Endothelial cell of umbilical vein (primary cell): ENCODE measurements at regions of chr10 and their contacts with region 1.

Region 1: GRCh38 chr10:63376560-63377304 is 89.0 kb downstream of the JMJD1C start:
- DNase-seq: peak; percentile 37
- H3K4me3 ChIP-seq: no peak overlapping the region
- H3K27ac ChIP-seq: no peak overlapping the region
- H3K4me1 ChIP-seq: peaks cover 22% of the 10 kb centered on the region
- H3K27me3 ChIP-seq: no peaks in the 10 kb centered on the region
- CTCF ChIP-seq: no peak
- POLR2A ChIP-seq: no peak

Region 2: DNA sequence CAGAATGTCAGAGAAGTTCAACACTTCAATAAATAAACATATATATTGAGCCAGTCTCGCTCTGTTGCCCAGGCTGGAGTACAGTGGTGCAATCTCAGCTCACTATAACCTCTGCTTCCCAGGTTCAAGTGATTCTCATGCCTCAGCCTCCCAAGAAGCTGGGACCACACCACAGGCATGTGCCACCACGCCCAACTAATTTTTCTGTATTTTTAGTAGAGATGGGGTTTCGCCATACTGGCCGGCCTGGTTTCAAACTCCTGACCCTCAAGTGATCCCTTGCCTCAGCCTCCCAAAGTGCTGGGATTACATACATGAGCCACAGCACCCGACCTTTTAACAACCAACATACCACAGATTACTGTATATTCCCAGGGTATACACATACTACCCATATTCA is 45.1 kb before region 1 on chr10:
- CTCF ChIA-PET with region 1: no interaction called
- POLR2A ChIA-PET with region 1: interaction called, 10 read pairs
- dilution Hi-C with region 1: no loop called
- intact Hi-C with region 1: no loop called
- DNase-seq: no peak
- H3K4me3 ChIP-seq: no peak overlapping the region
- H3K27ac ChIP-seq: no peak overlapping the region
- H3K4me1 ChIP-seq: no peaks in the 10 kb centered on the region
- H3K27me3 ChIP-seq: no peaks in the 10 kb centered on the region
- CTCF ChIP-seq: no peak
- POLR2A ChIP-seq: no peak

Region 3: GRCh38 chr10:63396133-63396761 is 19.5 kb after region 1 on chr10:
- CTCF ChIA-PET with region 1: no interaction called
- POLR2A ChIA-PET with region 1: no interaction called
- dilution Hi-C with region 1: no loop called
- intact Hi-C with region 1: no loop called
- DNase-seq: no peak
- H3K4me3 ChIP-seq: no peak overlapping the region
- H3K27ac ChIP-seq: no peak overlapping the region
- H3K4me1 ChIP-seq: no peaks in the 10 kb centered on the region
- H3K27me3 ChIP-seq: no peaks in the 10 kb centered on the region
- CTCF ChIP-seq: no peak
- POLR2A ChIP-seq: no peak

Region 4: DNA sequence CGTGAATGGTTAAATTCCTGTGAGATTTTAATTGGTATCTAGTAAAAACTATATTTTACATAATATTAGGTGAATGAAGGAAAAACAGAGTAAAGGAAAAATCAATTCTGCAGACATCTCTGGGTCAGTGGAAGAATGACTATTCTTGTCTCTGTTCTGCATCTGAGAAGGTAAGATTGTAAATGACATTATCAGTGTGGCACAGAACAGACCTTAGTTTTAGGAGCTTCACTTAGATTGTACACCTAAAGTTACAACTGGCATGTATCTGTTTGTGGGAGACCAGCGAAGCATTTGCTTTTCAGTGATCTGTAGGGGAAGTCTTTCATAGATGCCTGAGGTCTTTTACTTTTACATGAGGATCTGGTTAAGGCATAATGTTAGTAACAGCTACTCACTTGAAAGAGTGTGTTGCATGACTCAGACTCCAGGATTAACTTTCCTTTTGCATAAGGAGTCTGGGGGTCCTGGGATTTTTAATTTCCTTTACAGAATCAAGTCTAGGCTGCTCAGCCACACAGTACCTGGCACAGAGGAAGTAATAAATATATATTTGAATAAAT is 32.8 kb after region 1 on chr10:
- CTCF ChIA-PET with region 1: no interaction called
- POLR2A ChIA-PET with region 1: no interaction called
- dilution Hi-C with region 1: no loop called
- intact Hi-C with region 1: no loop called
- DNase-seq: peak; percentile 23
- H3K4me3 ChIP-seq: no peak overlapping the region
- H3K27ac ChIP-seq: no peak overlapping the region
- H3K4me1 ChIP-seq: peaks cover 13% of the 10 kb centered on the region
- H3K27me3 ChIP-seq: no peaks in the 10 kb centered on the region
- CTCF ChIP-seq: no peak
- POLR2A ChIP-seq: no peak

Region 5: DNA sequence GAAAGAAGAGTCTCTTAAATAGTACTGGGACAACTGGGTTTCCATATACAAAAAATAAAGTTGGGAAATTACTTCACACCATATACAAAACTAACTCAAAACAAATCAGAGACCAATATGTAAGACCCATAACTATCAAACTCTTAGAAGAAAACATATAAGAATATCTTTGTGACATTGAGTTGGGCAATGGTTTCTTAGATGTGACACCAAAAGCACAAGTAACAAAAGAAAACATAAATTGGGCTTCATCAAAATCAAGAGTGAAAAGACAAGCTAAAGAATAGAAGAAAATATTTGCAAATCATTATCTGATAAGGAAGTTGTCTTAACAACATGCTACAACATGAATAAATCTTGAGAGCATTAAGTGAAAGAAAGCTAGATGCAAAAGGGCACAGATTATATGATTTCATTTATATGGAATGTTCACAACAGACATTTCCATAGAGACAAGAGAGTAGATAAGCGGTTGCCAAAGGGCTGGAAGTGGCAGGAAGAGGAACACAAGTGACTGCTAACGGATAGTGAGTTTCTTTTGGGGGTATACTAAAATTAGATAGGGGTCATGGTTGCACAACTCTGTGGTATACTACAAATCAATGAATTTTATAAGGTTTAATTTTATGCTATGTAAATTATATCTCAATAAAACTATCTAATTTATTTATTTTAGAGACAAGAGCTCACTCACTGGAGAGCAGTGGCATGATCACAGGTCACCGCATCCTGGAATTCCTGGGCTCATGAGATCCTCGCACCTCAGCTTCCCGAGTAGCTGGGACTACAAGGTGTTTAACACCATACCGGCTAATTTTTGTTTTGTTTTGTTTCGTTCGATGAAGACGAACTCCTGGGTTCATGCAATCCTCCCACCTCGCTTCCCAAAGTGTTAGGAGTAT is 53.6 kb after region 1 on chr10:
- CTCF ChIA-PET with region 1: no interaction called
- POLR2A ChIA-PET with region 1: no interaction called
- dilution Hi-C with region 1: no loop called
- intact Hi-C with region 1: loop called (anchors 2 kb)
- DNase-seq: peak; percentile 83
- H3K4me3 ChIP-seq: no peak overlapping the region
- H3K27ac ChIP-seq: peak overlapping the region; percentile 92
- H3K4me1 ChIP-seq: peaks cover 55% of the 10 kb centered on the region
- H3K27me3 ChIP-seq: no peaks in the 10 kb centered on the region
- CTCF ChIP-seq: no peak
- POLR2A ChIP-seq: no peak

Region 6: GRCh38 chr10:63441404-63441803 is 64.7 kb after region 1 on chr10:
- CTCF ChIA-PET with region 1: no interaction called
- POLR2A ChIA-PET with region 1: no interaction called
- dilution Hi-C with region 1: no loop called
- intact Hi-C with region 1: no loop called
- DNase-seq: peak; percentile 15
- H3K4me3 ChIP-seq: no peak overlapping the region
- H3K27ac ChIP-seq: no peak overlapping the region
- H3K4me1 ChIP-seq: peaks cover 36% of the 10 kb centered on the region
- H3K27me3 ChIP-seq: no peaks in the 10 kb centered on the region
- CTCF ChIP-seq: no peak
- POLR2A ChIP-seq: no peak